ENCODE measurements at regions of chr1 and their contacts with region 1.

Region 1: DNA sequence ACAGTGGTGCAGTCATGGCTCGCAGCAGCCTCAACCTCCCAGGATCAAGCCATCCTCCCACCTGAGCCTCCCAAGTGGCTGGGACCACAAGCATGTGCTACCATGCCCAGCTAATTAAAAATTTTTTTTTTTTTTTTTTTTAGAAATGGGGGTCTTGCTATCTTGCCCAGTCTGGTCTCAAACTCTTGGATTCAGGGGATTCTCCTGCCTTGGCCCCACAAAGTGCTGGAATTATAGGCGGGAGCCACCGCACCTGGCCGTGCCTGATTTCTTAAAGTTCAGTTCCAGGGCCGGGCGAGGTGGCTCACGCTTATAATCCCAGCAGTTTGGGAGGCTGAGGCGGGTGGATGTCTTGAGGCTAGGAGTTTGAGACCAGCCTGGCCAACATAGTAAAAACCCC is 6.4 kb downstream of the THAP3 start:
- DNase-seq: no peak
- H3K4me3 ChIP-seq: no peak overlapping the region
- H3K27ac ChIP-seq: no peak overlapping the region
- H3K4me1 ChIP-seq: peaks cover 0 to 6% of the 10 kb centered on the region in 2 donors
- H3K27me3 ChIP-seq: no peaks in the 10 kb centered on the region
- CTCF ChIP-seq: no peak

Region 2: DNA sequence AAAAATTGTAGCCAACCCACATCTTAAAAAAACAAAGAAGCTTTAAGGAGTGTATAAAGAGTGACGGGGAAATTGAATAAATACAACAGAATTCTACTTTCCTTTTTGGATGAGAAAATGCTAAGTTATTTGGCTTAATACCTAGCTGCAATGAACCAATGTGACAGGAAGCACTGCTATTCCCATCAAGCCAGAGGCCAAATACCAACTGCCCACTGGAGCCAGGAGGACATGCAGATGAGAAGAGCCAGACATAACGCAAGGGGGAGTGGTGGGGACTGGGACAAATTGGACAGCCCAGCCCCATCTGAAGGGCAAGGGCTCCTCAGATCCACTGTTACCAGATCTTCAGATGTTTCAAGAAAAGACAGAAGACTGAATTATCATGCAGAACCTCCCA is 44.9 kb after region 1 on chr1:
- intact Hi-C with region 1: loop called (anchors 2 kb)
- DNase-seq: no peak
- H3K4me3 ChIP-seq: no peak overlapping the region
- H3K27ac ChIP-seq: no peak overlapping the region
- H3K4me1 ChIP-seq: no peaks in the 10 kb centered on the region
- H3K27me3 ChIP-seq: no peaks in the 10 kb centered on the region
- CTCF ChIP-seq: no peak

Measured in ascending aorta (tissue), 2 donors.